ENCODE measurements at regions of chr17 and their contacts with region 1.

Region 1: DNA sequence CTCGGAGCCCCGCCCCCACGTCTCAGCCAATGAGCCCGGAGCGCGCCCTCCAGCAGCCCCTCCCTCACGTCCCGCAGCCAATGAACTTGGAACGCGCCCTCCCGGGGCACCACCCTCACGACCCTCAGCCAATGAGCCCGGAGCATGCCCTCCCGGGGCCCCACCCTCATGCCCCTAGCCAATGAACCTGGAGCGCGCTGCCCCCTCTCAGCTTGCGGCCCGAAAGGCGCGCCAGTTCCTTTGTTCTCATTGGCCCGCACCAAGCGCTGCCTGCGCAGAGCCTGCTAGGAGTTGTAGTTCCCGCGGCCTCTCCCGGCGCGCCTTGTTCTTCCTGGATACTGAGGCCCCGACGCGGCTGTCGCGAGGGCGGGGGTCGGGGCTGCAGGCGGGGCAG is at the start of gene LRRC45:
- DNase-seq: peak; percentile 99 to 100 (median 100)
- H3K4me3 ChIP-seq: peak within 1 kb of the TSS; percentile 71 to 100 (median 91)
- H3K27ac ChIP-seq: peak within 1 kb of the TSS in 28 of 59 donors; percentile 11 to 79 (median 52)
- H3K27me3 ChIP-seq: no peaks in the 10 kb centered on the region
- CTCF ChIP-seq: peak in 14 of 56 donors; percentile 7 to 50 (median 26)
- total RNA-seq, gene LRRC45: 6.8 to 22.2 (median 12.3) TPM

Region 2: GRCh38 chr17:81959362-81960129 is 63.4 kb before region 1 on chr17:
- intact Hi-C with region 1: loop called (anchors 1 kb)
- DNase-seq: peak in 7 of 10 donors; percentile 44 to 83 (median 54)
- H3K4me3 ChIP-seq: peak overlapping the region; percentile 18 to 64 (median 47)
- H3K27ac ChIP-seq: no peak overlapping the region
- H3K27me3 ChIP-seq: peaks cover 0 to 41% (median 25%) of the 10 kb centered on the region in 45 donors
- CTCF ChIP-seq: peak in 55 of 56 donors; percentile 29 to 99 (median 75)

Region 3: GRCh38 chr17:81977211-81978027 is 45.6 kb before region 1 on chr17 and contains the start of gene ASPSCR1:
- intact Hi-C with region 1: loop called (anchors 2 to 5 kb)
- DNase-seq: peak; percentile 70 to 93 (median 86)
- H3K4me3 ChIP-seq: peak within 1 kb of the TSS; percentile 57 to 99 (median 88)
- H3K27ac ChIP-seq: peak within 1 kb of the TSS in 56 of 59 donors; percentile 23 to 94 (median 84)
- H3K27me3 ChIP-seq: no peaks in the 10 kb centered on the region
- CTCF ChIP-seq: peak in 23 of 56 donors; percentile 11 to 59 (median 29)
- total RNA-seq, gene ASPSCR1: 30.3 to 68.2 (median 44.6) TPM

Measured in dorsolateral prefrontal cortex (tissue), 120 donors.